PC-9 (cell line): ENCODE measurements at regions of chr18 and their contacts with region 1.

Region 1: GRCh38 chr18:31819106-31819924 is 58.6 kb upstream of the SLC25A52 start:
- DNase-seq: peak; percentile 1 to 42
- H3K4me3 ChIP-seq: no peak overlapping the region
- H3K27ac ChIP-seq: no peak overlapping the region
- H3K4me1 ChIP-seq: no peaks in the 10 kb centered on the region
- H3K27me3 ChIP-seq: no peaks in the 10 kb centered on the region
- CTCF ChIP-seq: peak; percentile 73

Region 2: DNA sequence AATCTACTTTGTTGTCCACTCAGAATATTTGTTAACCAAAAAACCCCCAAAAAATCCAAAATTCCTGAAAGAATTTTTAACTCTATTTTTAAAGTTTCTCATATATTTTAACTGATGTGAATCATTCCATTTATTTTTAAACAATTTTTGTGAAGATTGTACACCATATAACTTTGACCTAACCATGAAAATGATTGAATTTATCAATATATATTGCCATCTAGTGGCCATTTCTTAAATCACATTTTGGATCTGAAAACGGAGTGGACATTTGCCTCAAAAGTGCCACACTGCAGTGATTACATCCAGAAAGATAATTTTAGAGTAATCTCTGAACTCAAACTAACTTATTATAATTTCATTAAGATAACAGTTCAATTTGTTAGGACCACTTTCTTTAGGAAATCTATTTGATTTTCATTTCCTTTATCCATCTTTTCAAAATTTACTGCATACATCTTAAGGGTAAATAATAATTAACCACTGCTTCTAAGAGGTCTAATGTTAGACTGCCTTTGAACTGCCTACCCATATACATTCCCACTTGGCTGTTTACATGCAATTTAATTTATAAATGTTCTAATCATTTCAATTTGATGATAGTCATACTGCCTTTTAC is 847.9 kb before region 1 on chr18:
- CTCF ChIA-PET with region 1: no interaction called
- POLR2A ChIA-PET with region 1: no interaction called
- intact Hi-C with region 1: loop called (anchors 2 kb)
- DNase-seq: no peak
- H3K4me3 ChIP-seq: no peak overlapping the region
- H3K27ac ChIP-seq: no peak overlapping the region
- H3K4me1 ChIP-seq: 0 out of 2 replicates have a peak, but pooled peaks cover 4% of the 10 kb centered on the region
- H3K27me3 ChIP-seq: no peaks in the 10 kb centered on the region
- CTCF ChIP-seq: peak; percentile 65

Region 3: DNA sequence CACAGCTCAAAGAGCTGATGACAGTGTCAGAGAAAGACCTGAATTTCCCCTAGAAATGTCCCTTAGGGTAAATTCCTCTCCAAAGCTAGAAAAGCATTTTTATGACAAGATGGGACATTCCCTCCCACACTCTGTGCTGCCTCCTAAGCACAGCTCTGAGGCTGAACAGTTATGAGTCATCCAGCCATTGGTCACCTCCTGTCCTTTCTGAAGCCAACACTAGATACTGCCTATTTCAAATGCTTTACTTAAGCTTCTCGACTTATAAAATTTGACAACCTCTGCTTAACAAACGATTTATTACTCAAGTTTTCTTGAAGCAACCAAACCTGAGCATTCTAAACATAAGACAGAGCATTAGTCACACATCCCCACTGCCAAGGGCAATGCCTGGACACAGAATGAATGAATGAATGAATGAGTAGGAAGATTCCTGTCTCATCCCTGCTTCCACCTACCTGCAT is 170.3 kb before region 1 on chr18:
- CTCF ChIA-PET with region 1: no interaction called
- POLR2A ChIA-PET with region 1: no interaction called
- intact Hi-C with region 1: no loop called
- DNase-seq: peak; percentile 13 to 90
- H3K4me3 ChIP-seq: no peak overlapping the region
- H3K27ac ChIP-seq: peak overlapping the region; percentile 31; the same call in 1 of the 2 replicates
- H3K4me1 ChIP-seq: peaks cover 22% of the 10 kb centered on the region
- H3K27me3 ChIP-seq: no peaks in the 10 kb centered on the region
- CTCF ChIP-seq: no peak